ENCODE measurements at regions of chr13 and their contacts with region 1.

Region 1: GRCh38 chr13:40666045-40666904 is at the start of gene FOXO1:
- DNase-seq: peak; percentile 79
- H3K4me3 ChIP-seq: peak within 1 kb of the TSS; percentile 67 to 95 (median 86)
- H3K27ac ChIP-seq: peak within 1 kb of the TSS; percentile 81
- H3K4me1 ChIP-seq: peaks cover 24% of the 10 kb centered on the region
- H3K27me3 ChIP-seq: no peaks in the 10 kb centered on the region
- CTCF ChIP-seq: no peak
- POLR2A ChIP-seq: peak; percentile 97
- total RNA-seq, gene FOXO1: 47.6 and 48.5 TPM in 2 replicates

Region 2: DNA sequence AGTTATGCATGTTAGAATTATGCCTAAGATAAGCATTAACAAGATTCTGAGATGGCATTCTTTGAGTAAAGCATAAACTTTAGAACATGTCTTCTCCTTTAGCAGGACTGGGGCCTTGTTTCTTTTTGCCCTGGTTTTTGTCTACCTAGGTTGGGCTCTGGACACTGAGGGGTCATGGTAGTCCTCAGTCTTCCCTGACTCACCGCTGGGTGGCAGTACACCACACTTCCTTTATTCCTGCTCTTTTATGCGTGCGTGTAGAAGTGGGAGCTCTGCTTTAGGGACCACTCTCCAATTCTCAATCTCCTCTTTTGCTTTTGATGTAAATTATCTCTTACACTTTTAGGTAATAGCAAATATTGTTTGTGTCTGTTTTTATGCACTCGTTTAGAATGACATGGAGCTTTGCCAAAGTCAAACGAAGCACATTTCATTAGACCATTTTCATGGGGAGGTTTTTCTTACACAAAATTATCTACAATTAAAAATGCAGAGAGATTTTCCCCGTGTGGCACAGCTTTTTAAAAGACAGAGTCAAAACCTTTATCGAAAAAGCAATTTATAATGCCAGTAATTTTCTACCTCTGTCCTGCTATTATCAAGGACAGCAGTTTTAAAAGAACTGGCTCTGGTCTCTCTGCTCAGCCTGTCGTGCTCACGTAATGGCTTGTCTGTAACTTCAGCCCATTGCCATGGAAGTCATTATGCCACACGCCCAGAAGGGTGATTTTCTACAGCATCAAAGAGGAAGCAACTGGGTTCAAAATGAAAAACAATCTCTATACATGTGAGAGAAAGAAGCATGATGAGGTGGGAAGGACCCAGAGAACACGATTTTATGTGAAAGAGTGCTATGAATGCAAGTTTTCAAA is 596.9 kb before region 1 on chr13:
- CTCF ChIA-PET with region 1: interaction called, 6 read pairs
- POLR2A ChIA-PET with region 1: no interaction called
- dilution Hi-C with region 1: no loop called
- intact Hi-C with region 1: loop called (anchors 5 kb)
- DNase-seq: peak; percentile 69
- H3K4me3 ChIP-seq: no peak overlapping the region
- H3K27ac ChIP-seq: no peak overlapping the region
- H3K4me1 ChIP-seq: peaks cover 5% of the 10 kb centered on the region
- H3K27me3 ChIP-seq: no peaks in the 10 kb centered on the region
- CTCF ChIP-seq: peak; percentile 69 to 82
- POLR2A ChIP-seq: no peak

Region 3: DNA sequence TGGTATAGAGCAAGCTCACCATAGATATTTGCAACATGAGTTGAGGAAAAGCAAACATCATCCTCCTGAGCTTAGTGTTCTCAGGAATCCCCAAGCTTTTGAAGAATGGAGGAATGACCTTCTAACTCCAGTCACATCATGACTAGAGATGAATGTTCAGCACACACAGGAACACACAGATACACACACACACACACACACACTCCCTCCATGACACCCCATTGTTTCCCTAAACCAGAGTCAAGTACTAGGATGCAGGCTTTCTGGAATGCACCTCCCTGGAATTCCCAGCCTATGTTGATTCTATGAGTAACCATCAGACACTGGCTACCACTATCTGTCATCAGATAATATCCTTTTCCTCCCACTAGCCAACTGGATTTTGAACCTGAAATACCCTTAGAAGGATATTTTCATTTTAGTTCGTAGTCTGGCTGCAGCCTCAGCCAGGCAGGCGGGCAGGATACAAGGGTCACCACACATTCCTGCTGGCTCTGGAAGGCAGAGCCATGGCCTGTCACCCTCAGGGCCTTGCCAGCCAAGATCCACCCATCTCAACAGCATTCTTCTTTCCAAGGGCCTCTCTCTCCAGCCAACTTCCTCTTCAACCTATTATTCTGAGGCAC is 162.2 kb before region 1 on chr13:
- CTCF ChIA-PET with region 1: no interaction called
- POLR2A ChIA-PET with region 1: no interaction called
- dilution Hi-C with region 1: no loop called
- intact Hi-C with region 1: loop called (anchors 1 kb)
- DNase-seq: peak; percentile 99
- H3K4me3 ChIP-seq: no peak overlapping the region
- H3K27ac ChIP-seq: peak overlapping the region; percentile 99
- H3K4me1 ChIP-seq: peaks cover 51% of the 10 kb centered on the region
- H3K27me3 ChIP-seq: no peaks in the 10 kb centered on the region
- CTCF ChIP-seq: no peak
- POLR2A ChIP-seq: peak; percentile 74

Region 4: GRCh38 chr13:40564342-40565001 is 101.8 kb before region 1 on chr13:
- CTCF ChIA-PET with region 1: interaction called, 10 read pairs
- POLR2A ChIA-PET with region 1: interaction called, 6 read pairs
- dilution Hi-C with region 1: no loop called
- intact Hi-C with region 1: loop called (anchors 2 kb)
- DNase-seq: peak; percentile 91
- H3K4me3 ChIP-seq: peak overlapping the region in 1 of 3 experiments; percentile 3
- H3K27ac ChIP-seq: peak overlapping the region; percentile 46
- H3K4me1 ChIP-seq: peaks cover 57% of the 10 kb centered on the region
- H3K27me3 ChIP-seq: no peaks in the 10 kb centered on the region
- CTCF ChIP-seq: peak; percentile 29 to 54
- POLR2A ChIP-seq: no peak

Region 5: GRCh38 chr13:40639221-40639681 is 27.0 kb before region 1 on chr13:
- CTCF ChIA-PET with region 1: interaction called, 3 read pairs
- POLR2A ChIA-PET with region 1: interaction called, 4 read pairs
- dilution Hi-C with region 1: no loop called
- intact Hi-C with region 1: loop called (anchors 1 kb)
- DNase-seq: peak; percentile 80
- H3K4me3 ChIP-seq: no peak overlapping the region
- H3K27ac ChIP-seq: peak overlapping the region; percentile 60
- H3K4me1 ChIP-seq: peaks cover 29% of the 10 kb centered on the region
- H3K27me3 ChIP-seq: no peaks in the 10 kb centered on the region
- CTCF ChIP-seq: no peak
- POLR2A ChIP-seq: no peak